ENCODE measurements at regions of chr15 and their contacts with region 1.

Region 1: DNA sequence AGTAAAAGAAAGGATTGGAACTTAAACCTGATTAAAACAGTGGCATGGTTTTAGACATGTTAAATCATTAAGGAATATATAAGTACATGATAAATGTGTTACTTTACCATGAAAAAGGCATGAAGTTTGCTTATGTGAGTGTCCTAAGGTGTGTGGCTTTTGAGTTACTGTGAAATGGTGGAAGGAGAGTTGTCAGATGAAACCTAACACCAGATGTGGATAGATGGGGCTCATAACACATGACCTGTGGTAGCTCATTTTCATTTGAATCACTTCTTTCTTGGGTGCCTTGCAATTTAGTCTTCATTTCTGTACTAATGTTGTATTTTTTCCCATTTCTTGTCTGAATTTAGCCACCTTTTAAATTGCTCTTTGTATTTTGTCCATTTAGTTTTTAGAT is 13.0 kb downstream of the MEF2A start:
- DNase-seq: no peak
- H3K4me3 ChIP-seq: no peak overlapping the region
- H3K27me3 ChIP-seq: no peaks in the 10 kb centered on the region
- CTCF ChIP-seq: no peak

Region 2: DNA sequence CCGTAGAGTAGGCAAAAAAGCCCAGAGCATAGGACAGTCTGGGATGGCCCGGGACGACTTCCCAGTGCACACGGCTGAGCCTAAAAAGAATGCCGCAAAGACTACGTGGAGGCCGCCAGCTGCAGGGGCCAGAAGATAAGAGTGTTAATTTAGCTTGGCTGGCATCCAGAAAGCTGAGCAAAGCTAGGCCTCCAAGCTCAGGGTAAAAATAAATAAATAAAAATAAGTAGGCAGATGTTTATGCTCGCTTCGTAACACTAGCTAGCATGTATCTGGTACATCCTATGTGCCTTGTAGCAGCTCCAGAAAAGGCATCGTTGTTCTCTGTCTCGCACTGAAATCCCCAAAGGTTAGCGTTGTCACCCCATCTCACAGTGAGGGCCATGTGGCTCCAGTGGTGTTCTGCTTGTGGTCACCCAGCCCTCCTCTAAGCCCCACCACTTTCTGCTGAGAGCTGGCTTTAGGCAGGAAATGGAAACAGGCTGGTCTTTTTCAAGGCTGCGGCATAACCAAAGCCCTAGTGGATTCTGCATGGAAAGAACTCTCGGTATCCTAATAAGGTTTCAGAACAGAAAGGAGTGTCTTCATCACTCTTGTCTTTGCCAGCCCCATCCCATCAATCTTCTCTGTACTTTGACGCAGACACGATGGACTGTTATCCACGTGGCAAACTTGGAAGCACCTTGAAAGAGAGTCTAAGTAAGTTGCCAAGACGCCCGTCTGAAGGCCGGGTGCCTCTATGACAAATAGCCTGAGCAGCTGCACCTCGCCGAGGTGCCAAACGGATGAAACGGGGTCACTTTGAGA is 71.1 kb before region 1 on chr15:
- CTCF ChIA-PET with region 1: no interaction called
- POLR2A ChIA-PET with region 1: no interaction called
- DNase-seq: no peak
- H3K4me3 ChIP-seq: no peak overlapping the region
- H3K27me3 ChIP-seq: no peaks in the 10 kb centered on the region; the same call in none of the 2 replicates
- CTCF ChIP-seq: no peak

Region 3: DNA sequence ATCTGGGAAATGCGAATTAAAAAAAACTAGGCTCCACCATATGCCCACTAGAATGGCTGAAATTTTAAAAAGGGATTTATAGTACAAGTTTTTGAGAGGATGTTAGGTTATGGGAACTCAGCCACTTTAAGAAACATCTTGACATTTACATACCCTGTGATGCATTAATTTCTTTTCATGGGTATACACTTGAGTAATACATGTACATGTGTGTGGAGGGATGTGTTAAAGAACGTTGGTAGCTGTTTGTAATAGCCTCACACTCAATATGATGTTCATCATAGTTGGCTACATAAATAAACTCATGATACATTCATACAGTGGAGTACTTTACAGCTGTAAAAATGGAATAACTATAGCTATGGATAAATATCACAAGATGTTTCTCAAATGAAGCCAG is 27.8 kb after region 1 on chr15:
- CTCF ChIA-PET with region 1: no interaction called
- POLR2A ChIA-PET with region 1: interaction called, 15 read pairs
- DNase-seq: no peak
- H3K4me3 ChIP-seq: no peak overlapping the region
- H3K27me3 ChIP-seq: no peaks in the 10 kb centered on the region
- CTCF ChIP-seq: no peak

Region 4: DNA sequence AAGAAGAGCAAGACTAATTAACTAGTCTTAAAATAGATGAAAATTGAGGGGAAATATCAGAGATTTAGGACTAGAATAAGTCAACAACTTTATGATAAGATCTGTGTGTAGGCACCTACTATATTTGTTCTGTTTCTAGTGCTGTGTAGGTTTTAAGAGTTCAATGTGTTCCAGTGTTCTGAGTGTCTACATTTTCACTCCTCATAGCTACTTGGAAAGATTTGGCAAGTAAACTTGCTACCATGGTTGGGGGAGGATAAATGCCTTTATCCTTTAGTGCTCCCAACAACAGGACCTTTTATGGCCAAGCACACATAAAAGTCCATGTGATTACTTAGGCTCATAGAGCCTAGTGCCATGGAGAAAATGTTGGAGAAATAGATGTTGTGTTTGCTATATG is 90.4 kb after region 1 on chr15:
- CTCF ChIA-PET with region 1: no interaction called
- POLR2A ChIA-PET with region 1: no interaction called
- DNase-seq: no peak
- H3K4me3 ChIP-seq: no peak overlapping the region
- H3K27me3 ChIP-seq: no peaks in the 10 kb centered on the region
- CTCF ChIP-seq: no peak

Measured in BJ (cell line).